Caco-2 (cell line): ENCODE measurements at regions of chr12 and their contacts with region 1.

Region 1: DNA sequence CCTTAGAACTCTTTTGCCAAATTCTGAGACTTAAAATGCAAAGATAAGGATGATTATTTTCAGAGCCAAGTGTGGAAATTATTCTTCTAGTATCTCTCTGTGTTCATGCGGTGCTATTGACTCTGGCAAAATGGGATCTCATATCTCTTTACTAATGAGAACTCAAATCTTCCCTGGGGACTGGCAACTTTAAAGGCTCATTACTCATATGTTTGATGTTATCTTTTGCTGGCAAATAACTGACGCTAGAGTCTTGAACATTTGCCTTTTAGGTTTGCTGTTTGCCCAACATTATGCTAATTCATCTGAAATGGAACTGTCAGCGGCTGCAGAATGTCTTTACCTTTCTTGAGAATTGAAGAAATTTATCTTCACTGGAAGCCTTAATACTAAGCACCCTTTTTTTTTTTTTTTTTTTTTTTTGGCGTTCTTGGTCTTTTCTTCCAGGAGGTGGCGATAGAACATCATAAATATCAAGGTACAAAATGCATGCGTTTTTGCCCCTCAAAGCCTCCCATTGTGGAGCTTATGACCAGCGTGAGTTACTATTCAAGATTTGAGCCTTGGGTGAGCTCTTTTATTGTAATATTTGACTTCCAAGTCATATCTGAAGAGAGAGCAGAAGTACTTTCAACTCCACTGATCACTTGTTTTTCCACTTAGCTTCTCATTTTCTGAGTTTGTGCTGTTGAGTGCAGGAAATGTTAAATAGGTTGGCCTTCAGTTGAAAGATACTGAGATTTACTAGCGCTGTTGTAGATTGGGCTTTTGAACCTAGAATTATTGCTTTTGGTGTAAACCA is 86.6 kb downstream of the CAND1 start:
- DNase-seq: peak in 1 of 2 experiments; percentile 35
- H3K4me3 ChIP-seq: no peak overlapping the region
- H3K4me3 Mint-ChIP-seq: no peak overlapping the region
- H3K27ac Mint-ChIP-seq: no peak overlapping the region
- H3K4me1 ChIP-seq: peaks cover 3% of the 10 kb centered on the region; the same call in 1 of the 2 replicates
- H3K4me1 Mint-ChIP-seq: peaks cover 5% of the 10 kb centered on the region
- H3K27me3 ChIP-seq: no peaks in the 10 kb centered on the region
- H3K27me3 Mint-ChIP-seq: no peaks in the 10 kb centered on the region
- CTCF ChIP-seq: peak; percentile 55 to 60

Region 2: GRCh38 chr12:67315661-67316060 is 40.1 kb before region 1 on chr12:
- CTCF ChIA-PET with region 1: no interaction called
- POLR2A ChIA-PET with region 1: no interaction called
- intact Hi-C with region 1: no loop called
- DNase-seq: no peak
- H3K4me3 ChIP-seq: no peak overlapping the region
- H3K4me3 Mint-ChIP-seq: no peak overlapping the region
- H3K27ac Mint-ChIP-seq: no peak overlapping the region
- H3K4me1 ChIP-seq: no peaks in the 10 kb centered on the region
- H3K4me1 Mint-ChIP-seq: no peaks in the 10 kb centered on the region
- H3K27me3 ChIP-seq: no peaks in the 10 kb centered on the region
- H3K27me3 Mint-ChIP-seq: no peaks in the 10 kb centered on the region
- CTCF ChIP-seq: no peak

Region 3: GRCh38 chr12:67415473-67415872 is 59.7 kb after region 1 on chr12:
- CTCF ChIA-PET with region 1: interaction called, 11 read pairs
- POLR2A ChIA-PET with region 1: no interaction called
- intact Hi-C with region 1: loop called (anchors 1 kb)
- DNase-seq: peak in 1 of 2 experiments; percentile 20
- H3K4me3 ChIP-seq: no peak overlapping the region
- H3K4me3 Mint-ChIP-seq: no peak overlapping the region
- H3K27ac Mint-ChIP-seq: no peak overlapping the region
- H3K4me1 ChIP-seq: no peaks in the 10 kb centered on the region
- H3K4me1 Mint-ChIP-seq: peaks cover 2% of the 10 kb centered on the region
- H3K27me3 ChIP-seq: no peaks in the 10 kb centered on the region
- H3K27me3 Mint-ChIP-seq: no peaks in the 10 kb centered on the region
- CTCF ChIP-seq: peak in 1 of 2 experiments; percentile 64

Region 4: DNA sequence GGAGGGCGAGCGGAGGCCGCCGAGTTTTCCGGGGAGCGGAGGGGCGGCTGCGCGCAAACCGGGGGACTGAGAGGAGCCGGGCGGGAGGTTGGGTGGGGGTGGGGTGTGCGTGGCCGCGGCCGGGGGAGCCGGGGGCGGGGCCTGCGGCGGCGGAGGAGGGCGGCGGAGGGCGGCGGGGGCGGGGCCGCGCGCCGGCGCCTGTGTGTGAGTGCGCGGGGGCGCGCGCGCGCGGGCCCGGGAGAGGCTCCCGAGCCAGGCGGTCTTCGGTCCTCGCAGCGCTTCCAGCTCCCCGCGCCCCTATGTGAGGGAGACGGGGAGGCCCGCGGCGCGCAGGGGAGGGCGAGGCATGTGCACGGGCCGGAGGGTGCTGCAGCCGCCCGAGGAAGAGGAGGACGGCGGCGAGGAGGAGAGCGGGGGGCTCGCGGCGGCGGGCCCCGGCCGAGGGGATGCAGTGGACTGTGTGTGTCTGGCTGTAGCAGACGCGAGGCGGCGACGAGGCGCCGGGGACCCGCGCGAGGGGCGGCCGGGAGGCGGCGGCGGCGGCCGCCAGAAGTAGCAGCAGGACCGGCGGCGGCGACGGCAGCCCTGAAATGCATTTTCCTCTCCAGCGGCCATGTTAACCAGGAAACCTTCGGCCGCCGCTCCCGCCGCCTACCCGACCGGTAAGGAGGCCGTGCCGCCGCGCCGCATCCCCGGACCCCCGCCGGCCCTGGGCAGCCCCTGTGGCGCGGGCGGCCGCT is 292.9 kb after region 1 on chr12 and contains the start of gene DYRK2:
- CTCF ChIA-PET with region 1: interaction called, 4 read pairs
- POLR2A ChIA-PET with region 1: no interaction called
- intact Hi-C with region 1: loop called (anchors 10 kb)
- DNase-seq: peak; percentile 74 to 82
- H3K4me3 ChIP-seq: peak within 1 kb of the TSS; percentile 75
- H3K4me3 Mint-ChIP-seq: peak within 1 kb of the TSS; percentile 79
- H3K27ac Mint-ChIP-seq: peak within 1 kb of the TSS; percentile 93
- H3K4me1 ChIP-seq: peaks cover 24% of the 10 kb centered on the region; the same call in 1 of the 2 replicates
- H3K4me1 Mint-ChIP-seq: peaks cover 14% of the 10 kb centered on the region
- H3K27me3 ChIP-seq: no peaks in the 10 kb centered on the region
- H3K27me3 Mint-ChIP-seq: no peaks in the 10 kb centered on the region
- CTCF ChIP-seq: peak in 1 of 2 experiments; percentile 8
- total RNA-seq, gene DYRK2: 24.4 and 24.6 TPM in 2 replicates

Region 5: GRCh38 chr12:68317047-68317667 is 961.4 kb after region 1 on chr12:
- CTCF ChIA-PET with region 1: no interaction called
- POLR2A ChIA-PET with region 1: no interaction called
- intact Hi-C with region 1: loop called (anchors 5 kb)
- DNase-seq: peak in 1 of 2 experiments; percentile 35
- H3K4me3 ChIP-seq: no peak overlapping the region
- H3K4me3 Mint-ChIP-seq: no peak overlapping the region
- H3K27ac Mint-ChIP-seq: no peak overlapping the region
- H3K4me1 ChIP-seq: no peaks in the 10 kb centered on the region
- H3K4me1 Mint-ChIP-seq: no peaks in the 10 kb centered on the region
- H3K27me3 ChIP-seq: no peaks in the 10 kb centered on the region
- H3K27me3 Mint-ChIP-seq: no peaks in the 10 kb centered on the region
- CTCF ChIP-seq: peak; percentile 62 to 68